Breast epithelium (tissue), 4 donors: ENCODE measurements at regions of chr13 and their contacts with region 1.

Region 1: GRCh38 chr13:76773448-76774094 is 112.6 kb downstream of the KCTD12 start:
- DNase-seq: no peak
- H3K4me3 ChIP-seq: no peak overlapping the region
- H3K27ac ChIP-seq: peak overlapping the region in 1 of 2 donors; percentile 57
- H3K4me1 ChIP-seq: no peaks in the 10 kb centered on the region
- H3K27me3 ChIP-seq: no peaks in the 10 kb centered on the region
- CTCF ChIP-seq: no peak
- POLR2A ChIP-seq: no peak

Region 2: GRCh38 chr13:76086729-76087128 is 686.8 kb before region 1 on chr13:
- intact Hi-C with region 1: no loop called
- DNase-seq: no peak
- H3K4me3 ChIP-seq: no peak overlapping the region
- H3K27ac ChIP-seq: no peak overlapping the region
- H3K4me1 ChIP-seq: no peaks in the 10 kb centered on the region
- H3K27me3 ChIP-seq: no peaks in the 10 kb centered on the region
- CTCF ChIP-seq: no peak
- POLR2A ChIP-seq: no peak

Region 3: GRCh38 chr13:76610819-76611415 is 162.7 kb before region 1 on chr13:
- intact Hi-C with region 1: no loop called
- DNase-seq: no peak
- H3K4me3 ChIP-seq: no peak overlapping the region
- H3K27ac ChIP-seq: no peak overlapping the region
- H3K4me1 ChIP-seq: no peaks in the 10 kb centered on the region
- H3K27me3 ChIP-seq: no peaks in the 10 kb centered on the region
- CTCF ChIP-seq: no peak
- POLR2A ChIP-seq: no peak

Region 4: GRCh38 chr13:76732367-76732766 is 41.2 kb before region 1 on chr13:
- intact Hi-C with region 1: loop called (anchors 2 kb)
- DNase-seq: no peak
- H3K4me3 ChIP-seq: no peak overlapping the region
- H3K27ac ChIP-seq: no peak overlapping the region
- H3K4me1 ChIP-seq: no peaks in the 10 kb centered on the region
- H3K27me3 ChIP-seq: no peaks in the 10 kb centered on the region
- CTCF ChIP-seq: no peak
- POLR2A ChIP-seq: no peak